Right ventricle myocardium inferior (tissue), 1 donor: ENCODE measurements at regions of chr9 and their contacts with region 1.

Region 1: DNA sequence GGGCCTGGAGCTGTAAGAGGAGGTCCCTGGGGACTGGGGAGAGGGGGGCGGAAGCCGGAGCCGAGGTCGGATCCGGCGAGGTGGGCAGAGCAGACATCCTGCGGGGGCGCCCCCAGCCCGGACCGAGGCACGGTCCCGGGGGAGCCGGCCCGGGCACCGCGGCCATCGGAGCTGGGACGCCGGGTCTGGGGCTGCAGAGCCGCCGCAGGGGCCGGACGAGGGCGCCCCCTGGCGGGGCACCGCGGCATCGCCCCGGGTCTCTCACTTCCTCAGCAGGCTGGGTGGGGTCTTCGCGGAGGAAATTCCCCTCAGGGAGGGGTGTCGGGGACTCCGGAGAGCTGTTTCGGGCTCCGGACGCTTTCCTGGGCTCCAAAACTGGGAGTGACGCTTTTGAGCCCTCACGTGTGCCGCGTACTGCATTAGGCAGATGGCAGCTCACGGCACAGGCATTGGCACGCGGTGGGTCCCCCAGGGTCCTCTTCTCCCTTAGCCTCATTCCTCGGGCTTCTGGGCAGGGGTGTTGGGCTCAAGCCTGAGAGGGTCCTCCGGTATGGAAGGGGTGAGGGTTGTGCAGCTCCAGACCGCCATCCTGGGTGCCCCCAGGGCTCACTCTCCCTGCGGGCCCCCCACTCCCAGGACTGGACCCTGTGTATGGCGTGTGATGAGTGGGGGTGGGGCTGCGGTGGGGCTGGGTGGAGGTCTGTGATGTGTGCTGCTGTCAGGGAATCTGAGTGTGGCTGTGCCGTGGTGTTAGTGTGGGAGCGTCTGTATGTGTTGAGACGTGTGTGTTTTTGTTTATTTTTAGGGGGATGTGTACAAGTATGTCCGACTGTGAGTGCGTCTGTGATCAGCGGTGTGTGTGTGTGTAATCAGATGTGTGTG is 29.6 kb downstream of the LHX2 start:
- DNase-seq: no peak
- ATAC-seq: peak; percentile 41

Region 2: GRCh38 chr9:123401879-123402513 is 639.2 kb before region 1 on chr9:
- intact Hi-C with region 1: loop called (anchors 5 kb)
- DNase-seq: no peak
- ATAC-seq: peak; percentile 86

Region 3: DNA sequence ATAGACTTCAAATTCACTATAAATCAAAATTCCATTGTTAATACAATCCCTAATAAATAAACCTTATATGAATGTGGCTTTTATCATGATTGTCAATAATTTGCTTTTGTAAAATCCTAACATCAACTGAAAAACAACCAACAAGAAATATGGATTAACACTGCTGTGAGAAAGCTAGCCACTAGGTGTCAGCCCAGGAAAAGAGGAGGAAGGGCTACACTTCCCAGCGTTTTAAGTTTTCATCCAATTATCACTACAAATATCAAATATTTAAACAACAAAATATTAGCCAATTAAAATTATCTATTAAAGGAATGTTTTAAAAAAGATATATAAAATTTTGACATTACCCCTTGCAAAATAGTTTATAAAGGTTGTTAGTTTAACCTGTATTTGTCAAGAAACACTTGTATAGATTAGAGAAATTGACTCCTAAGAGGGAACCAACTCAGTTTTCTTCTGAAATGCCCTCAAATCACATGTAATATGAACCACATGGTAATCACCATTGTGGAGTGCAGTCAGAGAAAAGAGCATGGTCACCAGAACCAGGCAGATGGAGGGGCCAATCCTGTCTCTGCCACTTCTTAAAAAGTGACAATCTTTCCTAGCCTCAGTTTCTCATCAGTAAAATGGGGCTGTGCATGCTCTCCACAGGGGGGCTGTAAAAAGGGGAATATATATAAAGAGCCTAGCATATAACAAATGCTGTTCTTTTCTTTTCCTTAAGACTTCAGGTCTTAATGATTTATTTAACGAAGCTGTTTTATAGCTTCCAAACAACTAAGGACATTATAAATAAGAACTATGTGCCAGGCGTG is 497.0 kb before region 1 on chr9:
- intact Hi-C with region 1: loop called (anchors 2 kb)
- DNase-seq: no peak
- ATAC-seq: peak; percentile 54

Region 4: GRCh38 chr9:123724211-123724796 is 316.9 kb before region 1 on chr9:
- intact Hi-C with region 1: loop called (anchors 5 kb)
- DNase-seq: no peak
- ATAC-seq: no peak

Region 5: DNA sequence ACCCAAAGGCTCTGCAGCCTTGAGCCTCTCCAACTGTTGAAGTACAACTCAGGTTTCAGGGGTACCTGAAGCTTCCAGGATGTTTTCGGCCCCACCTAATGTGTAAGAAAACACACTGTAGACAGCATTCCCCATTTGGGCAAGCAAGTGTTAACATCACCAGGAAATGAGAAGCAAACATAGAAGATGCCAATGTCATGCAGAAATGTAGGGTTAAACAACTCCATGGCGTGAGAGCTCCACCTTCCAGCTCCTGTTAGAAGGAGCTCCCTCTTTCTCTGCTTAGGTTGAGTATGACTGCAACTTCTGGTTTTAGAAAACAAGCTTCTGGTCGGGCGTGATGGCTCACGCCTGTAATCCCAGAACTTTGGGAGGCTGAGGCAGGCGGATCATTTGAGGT is 80.2 kb before region 1 on chr9:
- intact Hi-C with region 1: no loop called
- DNase-seq: no peak
- ATAC-seq: no peak

Region 6: GRCh38 chr9:124062172-124062571 is 21.0 kb after region 1 on chr9:
- intact Hi-C with region 1: no loop called
- DNase-seq: no peak
- ATAC-seq: no peak